ENCODE measurements at regions of chr10 and their contacts with region 1.

Region 1: GRCh38 chr10:2005546-2005945 is 268.2 kb upstream of the ADARB2 start:
- DNase-seq: no peak
- H3K27ac ChIP-seq: no peak overlapping the region
- CTCF ChIP-seq: no peak

Region 2: GRCh38 chr10:2094171-2094570 is 88.6 kb after region 1 on chr10:
- CTCF ChIA-PET with region 1: interaction called, 11 read pairs
- POLR2A ChIA-PET with region 1: no interaction called
- DNase-seq: no peak
- H3K27ac ChIP-seq: no peak overlapping the region
- CTCF ChIP-seq: no peak

Measured in RWPE1 (cell line).